Caco-2 (cell line): ENCODE measurements at regions of chr19 and their contacts with region 1.

Region 1: DNA sequence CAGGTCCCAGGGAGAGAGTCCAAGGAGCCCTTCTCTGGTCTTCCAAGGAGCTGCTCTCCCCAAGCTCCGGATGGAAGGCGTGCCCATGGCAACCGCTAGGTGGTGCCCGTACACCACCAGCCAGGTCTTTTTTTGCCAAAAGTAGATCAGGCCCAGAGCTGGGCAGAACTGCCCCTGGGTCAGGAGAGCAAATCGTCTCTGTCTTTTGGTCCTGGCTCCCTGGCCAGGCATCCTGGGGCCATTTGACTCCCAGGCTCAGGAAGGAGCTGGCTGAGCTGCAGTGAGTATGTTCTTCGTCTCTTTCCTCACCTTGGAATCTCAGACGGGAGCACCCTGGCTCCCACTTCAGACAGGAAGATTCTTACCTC is 24.6 kb upstream of the BCL3 start:
- DNase-seq: peak; percentile 87 to 91
- H3K4me3 ChIP-seq: peak overlapping the region; percentile 15
- H3K4me3 Mint-ChIP-seq: peak overlapping the region; percentile 62
- H3K27ac Mint-ChIP-seq: peak overlapping the region; percentile 43
- H3K4me1 ChIP-seq: peaks cover 53% of the 10 kb centered on the region
- H3K4me1 Mint-ChIP-seq: peaks cover 47% of the 10 kb centered on the region
- H3K27me3 ChIP-seq: no peaks in the 10 kb centered on the region
- H3K27me3 Mint-ChIP-seq: no peaks in the 10 kb centered on the region
- CTCF ChIP-seq: peak; percentile 97 to 98

Region 2: GRCh38 chr19:44635581-44636438 is 88.1 kb before region 1 on chr19:
- CTCF ChIA-PET with region 1: no interaction called
- POLR2A ChIA-PET with region 1: no interaction called
- intact Hi-C with region 1: no loop called
- DNase-seq: no peak
- H3K4me3 ChIP-seq: no peak overlapping the region
- H3K4me3 Mint-ChIP-seq: no peak overlapping the region
- H3K27ac Mint-ChIP-seq: no peak overlapping the region
- H3K4me1 ChIP-seq: peaks cover 49% of the 10 kb centered on the region
- H3K4me1 Mint-ChIP-seq: peaks cover 49% of the 10 kb centered on the region
- H3K27me3 ChIP-seq: no peaks in the 10 kb centered on the region
- H3K27me3 Mint-ChIP-seq: no peaks in the 10 kb centered on the region
- CTCF ChIP-seq: no peak

Region 3: DNA sequence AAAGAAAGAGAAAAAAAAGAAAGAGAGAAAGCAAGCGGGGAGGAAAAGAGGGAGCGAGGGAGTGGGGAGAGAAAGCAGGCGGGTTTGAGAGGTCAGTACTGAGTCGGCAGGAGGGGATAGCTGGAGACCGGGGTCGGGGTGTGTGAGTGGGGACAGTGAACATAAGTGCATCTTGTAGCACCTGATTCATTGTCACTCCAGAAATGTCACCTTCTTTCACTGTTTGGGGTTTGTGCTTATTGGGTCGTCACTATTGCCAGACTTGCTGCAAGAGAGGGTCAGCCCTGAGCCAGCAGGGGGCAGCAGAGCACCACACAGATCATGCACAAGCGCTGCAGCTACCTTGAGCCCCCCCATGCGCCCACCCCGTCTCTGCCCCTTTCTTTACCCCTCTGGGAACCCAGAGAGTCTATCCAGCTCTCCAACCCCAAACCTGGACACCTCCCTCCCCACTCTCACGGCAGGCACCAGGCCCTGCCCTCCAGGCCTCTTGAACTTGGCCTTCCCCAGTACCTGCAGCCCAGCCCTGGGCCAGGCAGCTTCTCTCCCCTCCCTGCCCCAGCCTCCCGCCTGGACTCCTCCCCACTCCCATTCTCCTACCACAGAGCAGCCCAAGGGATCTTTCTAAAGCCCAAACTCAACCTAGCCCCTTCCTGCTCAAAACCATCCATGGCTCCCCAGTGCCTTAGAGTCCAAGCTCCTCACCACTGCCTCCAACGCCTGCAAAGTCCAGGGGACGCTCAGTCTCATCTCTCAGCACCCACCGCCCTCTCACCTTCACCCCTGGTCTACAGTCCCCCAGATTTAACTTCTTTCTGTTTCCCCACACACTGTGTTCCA is 34.7 kb before region 1 on chr19:
- CTCF ChIA-PET with region 1: interaction called, 26 read pairs
- POLR2A ChIA-PET with region 1: no interaction called
- intact Hi-C with region 1: loop called (anchors 1 kb)
- DNase-seq: peak; percentile 85 to 89
- H3K4me3 ChIP-seq: no peak overlapping the region
- H3K4me3 Mint-ChIP-seq: peak overlapping the region; percentile 7
- H3K27ac Mint-ChIP-seq: peak overlapping the region; percentile 5
- H3K4me1 ChIP-seq: peaks cover 31% of the 10 kb centered on the region
- H3K4me1 Mint-ChIP-seq: peaks cover 24% of the 10 kb centered on the region
- H3K27me3 ChIP-seq: no peaks in the 10 kb centered on the region
- H3K27me3 Mint-ChIP-seq: no peaks in the 10 kb centered on the region
- CTCF ChIP-seq: peak; percentile 97 to 99

Region 4: GRCh38 chr19:44746946-44747738 is 23.2 kb after region 1 on chr19:
- CTCF ChIA-PET with region 1: interaction called, 9 read pairs
- POLR2A ChIA-PET with region 1: interaction called, 8 read pairs
- intact Hi-C with region 1: loop called (anchors 1 kb)
- DNase-seq: peak; percentile 95 to 96
- H3K4me3 ChIP-seq: peak overlapping the region; percentile 61
- H3K4me3 Mint-ChIP-seq: peak overlapping the region; percentile 87
- H3K27ac Mint-ChIP-seq: peak overlapping the region; percentile 63
- H3K4me1 ChIP-seq: peaks cover 48% of the 10 kb centered on the region
- H3K4me1 Mint-ChIP-seq: peaks cover 30% of the 10 kb centered on the region
- H3K27me3 ChIP-seq: no peaks in the 10 kb centered on the region
- H3K27me3 Mint-ChIP-seq: no peaks in the 10 kb centered on the region
- CTCF ChIP-seq: no peak

Region 5: DNA sequence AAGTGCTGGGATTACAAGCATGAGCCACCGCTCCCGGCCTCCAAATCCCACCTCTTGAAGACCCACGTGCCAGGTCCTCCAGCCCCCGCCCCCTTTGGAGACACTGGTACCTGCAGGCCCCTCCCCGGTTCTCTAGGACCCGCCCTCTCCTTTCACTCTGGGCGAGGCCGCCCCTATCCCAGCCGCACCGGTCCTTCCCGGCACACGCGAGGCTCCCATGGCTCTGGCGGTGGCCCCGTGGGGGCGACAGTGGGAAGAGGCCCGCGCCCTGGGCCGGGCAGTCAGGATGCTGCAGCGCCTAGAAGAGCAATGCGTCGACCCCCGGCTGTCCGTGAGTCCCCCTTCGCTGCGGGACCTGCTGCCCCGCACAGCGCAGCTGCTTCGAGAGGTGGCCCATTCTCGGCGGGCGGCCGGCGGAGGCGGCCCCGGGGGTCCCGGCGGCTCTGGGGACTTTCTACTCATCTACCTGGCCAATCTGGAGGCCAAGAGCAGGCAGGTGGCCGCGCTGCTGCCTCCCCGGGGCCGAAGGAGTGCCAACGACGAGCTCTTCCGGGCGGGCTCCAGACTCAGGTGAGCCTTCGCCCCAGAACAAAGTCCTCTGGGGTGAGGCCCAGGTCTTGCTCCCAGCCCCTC is 53.9 kb after region 1 on chr19 and contains the start of gene CBLC:
- CTCF ChIA-PET with region 1: interaction called, 15 read pairs
- POLR2A ChIA-PET with region 1: interaction called, 3 read pairs
- intact Hi-C with region 1: no loop called
- DNase-seq: peak; percentile 97 to 98
- H3K4me3 ChIP-seq: peak within 1 kb of the TSS; percentile 83
- H3K4me3 Mint-ChIP-seq: peak within 1 kb of the TSS; percentile 73
- H3K27ac Mint-ChIP-seq: peak within 1 kb of the TSS; percentile 91
- H3K4me1 ChIP-seq: peaks cover 15% of the 10 kb centered on the region
- H3K4me1 Mint-ChIP-seq: peaks cover 5% of the 10 kb centered on the region
- H3K27me3 ChIP-seq: no peaks in the 10 kb centered on the region
- H3K27me3 Mint-ChIP-seq: no peaks in the 10 kb centered on the region
- CTCF ChIP-seq: peak in 1 of 2 experiments; percentile 38
- total RNA-seq, gene CBLC: 42.3 and 43.6 TPM in 2 replicates

Region 6: GRCh38 chr19:44808463-44809371 is 84.8 kb after region 1 on chr19 and contains the start of gene BCAM:
- CTCF ChIA-PET with region 1: interaction called, 22 read pairs
- POLR2A ChIA-PET with region 1: interaction called, 9 read pairs
- intact Hi-C with region 1: loop called (anchors 1 kb)
- DNase-seq: peak; percentile 86
- H3K4me3 ChIP-seq: peak within 1 kb of the TSS; percentile 79
- H3K4me3 Mint-ChIP-seq: peak within 1 kb of the TSS; percentile 82
- H3K27ac Mint-ChIP-seq: peak within 1 kb of the TSS; percentile 95
- H3K4me1 ChIP-seq: peaks cover 27% of the 10 kb centered on the region
- H3K4me1 Mint-ChIP-seq: peaks cover 45% of the 10 kb centered on the region
- H3K27me3 ChIP-seq: no peaks in the 10 kb centered on the region
- H3K27me3 Mint-ChIP-seq: no peaks in the 10 kb centered on the region
- CTCF ChIP-seq: no peak
- total RNA-seq, gene BCAM: 230 and 244 TPM in 2 replicates

Region 7: GRCh38 chr19:44927746-44928145 is 203.8 kb after region 1 on chr19:
- CTCF ChIA-PET with region 1: no interaction called
- POLR2A ChIA-PET with region 1: no interaction called
- intact Hi-C with region 1: no loop called
- DNase-seq: no peak
- H3K4me3 ChIP-seq: no peak overlapping the region
- H3K4me3 Mint-ChIP-seq: no peak overlapping the region
- H3K27ac Mint-ChIP-seq: no peak overlapping the region
- H3K4me1 ChIP-seq: peaks cover 10% of the 10 kb centered on the region
- H3K4me1 Mint-ChIP-seq: peaks cover 15% of the 10 kb centered on the region
- H3K27me3 ChIP-seq: no peaks in the 10 kb centered on the region
- H3K27me3 Mint-ChIP-seq: no peaks in the 10 kb centered on the region
- CTCF ChIP-seq: no peak